ENCODE measurements at regions of chr7 and their contacts with region 1.

Region 1: GRCh38 chr7:33895025-33895804 is 10.1 kb upstream of the BMPER start:
- DNase-seq: peak; percentile 93
- H3K4me3 ChIP-seq: peak overlapping the region in 1 of 8 donors; percentile 16
- H3K27ac ChIP-seq: no peak overlapping the region
- H3K4me1 ChIP-seq: peaks cover 0 to 12% (median 9%) of the 10 kb centered on the region in 6 donors
- H3K27me3 ChIP-seq: peaks cover 0 to 18% (median 0%) of the 10 kb centered on the region in 7 donors
- CTCF ChIP-seq: peak; percentile 41 to 95 (median 84)
- POLR2A ChIP-seq: no peak

Region 2: GRCh38 chr7:33243319-33243881 is 651.8 kb before region 1 on chr7:
- intact Hi-C with region 1: loop called (anchors 10 kb)
- DNase-seq: no peak
- H3K4me3 ChIP-seq: no peak overlapping the region
- H3K27ac ChIP-seq: no peak overlapping the region
- H3K4me1 ChIP-seq: peaks cover 0 to 5% (median 0%) of the 10 kb centered on the region in 6 donors
- H3K27me3 ChIP-seq: no peaks in the 10 kb centered on the region
- CTCF ChIP-seq: peak in 8 of 11 experiments; percentile 12 to 61 (median 49)
- POLR2A ChIP-seq: no peak